ENCODE measurements at regions of chr18 and their contacts with region 1.

Region 1: GRCh38 chr18:59402432-59403090 is 43.5 kb upstream of the LMAN1 start:
- DNase-seq: peak; percentile 90
- ATAC-seq: peak; percentile 100
- H3K4me3 ChIP-seq: no peak overlapping the region
- H3K27ac ChIP-seq: no peak overlapping the region
- H3K4me1 ChIP-seq: no peaks in the 10 kb centered on the region
- H3K27me3 ChIP-seq: 0 out of 5 replicates have a peak, but pooled peaks cover 0 to 3% of the 10 kb centered on the region in 2 experiments
- CTCF ChIP-seq: peak; percentile 98
- EP300 ChIP-seq: no peak
- POLR2A ChIP-seq: no peak
- RAD21 ChIP-seq: peak; percentile 95

Region 2: GRCh38 chr18:59308248-59308937 is 94.2 kb before region 1 on chr18:
- CTCF ChIA-PET with region 1: interaction called, 56 read pairs
- POLR2A ChIA-PET with region 1: no interaction called
- in situ Hi-C with region 1: loop called (anchors 5 kb)
- intact Hi-C with region 1: loop called (anchors 2 kb)
- DNase-seq: peak; percentile 29
- ATAC-seq: peak; percentile 99
- H3K4me3 ChIP-seq: peak overlapping the region in 1 of 3 experiments; percentile 57; a peak in 2 of 6 replicates
- H3K27ac ChIP-seq: no peak overlapping the region
- H3K4me1 ChIP-seq: 0 out of 2 replicates have a peak, but pooled peaks cover 4% of the 10 kb centered on the region
- H3K27me3 ChIP-seq: peaks cover 3 to 51% of the 10 kb centered on the region in 2 experiments; a peak in 4 of 5 replicates
- CTCF ChIP-seq: peak; percentile 90
- EP300 ChIP-seq: no peak
- POLR2A ChIP-seq: no peak
- RAD21 ChIP-seq: peak; percentile 77

Region 3: GRCh38 chr18:59358712-59359575 is 43.6 kb before region 1 on chr18 and contains the start of gene LMAN1:
- CTCF ChIA-PET with region 1: no interaction called
- POLR2A ChIA-PET with region 1: no interaction called
- in situ Hi-C with region 1: no loop called
- intact Hi-C with region 1: loop called (anchors 2 kb)
- DNase-seq: peak; percentile 85
- ATAC-seq: peak; percentile 96
- H3K4me3 ChIP-seq: peak within 1 kb of the TSS; percentile 97 to 100 (median 98)
- H3K27ac ChIP-seq: peak within 1 kb of the TSS; percentile 98
- H3K4me1 ChIP-seq: peaks cover 43% of the 10 kb centered on the region
- H3K27me3 ChIP-seq: peaks cover 0 to 4% of the 10 kb centered on the region in 2 experiments; a peak in 1 of 5 replicates
- CTCF ChIP-seq: 0 out of 2 replicates have a peak, but pooled peaks have one; percentile 7
- EP300 ChIP-seq: no peak
- POLR2A ChIP-seq: peak; percentile 76 to 89
- RAD21 ChIP-seq: no peak
- total RNA-seq, gene LMAN1: 79.1 and 131 TPM in 2 replicates

Measured in HepG2 (cell line).